Thyroid gland (tissue), 4 donors: ENCODE measurements at regions of chr18 and their contacts with region 1.

Region 1: GRCh38 chr18:48675352-48675761 is 136.5 kb downstream of the CTIF start:
- DNase-seq: peak; percentile 88 to 92
- H3K4me3 ChIP-seq: no peak overlapping the region
- H3K27ac ChIP-seq: no peak overlapping the region
- H3K4me1 ChIP-seq: peaks cover 6 to 23% of the 10 kb centered on the region in 2 donors
- H3K27me3 ChIP-seq: no peaks in the 10 kb centered on the region
- CTCF ChIP-seq: peak; percentile 71 to 97 (median 94)
- POLR2A ChIP-seq: no peak

Region 2: DNA sequence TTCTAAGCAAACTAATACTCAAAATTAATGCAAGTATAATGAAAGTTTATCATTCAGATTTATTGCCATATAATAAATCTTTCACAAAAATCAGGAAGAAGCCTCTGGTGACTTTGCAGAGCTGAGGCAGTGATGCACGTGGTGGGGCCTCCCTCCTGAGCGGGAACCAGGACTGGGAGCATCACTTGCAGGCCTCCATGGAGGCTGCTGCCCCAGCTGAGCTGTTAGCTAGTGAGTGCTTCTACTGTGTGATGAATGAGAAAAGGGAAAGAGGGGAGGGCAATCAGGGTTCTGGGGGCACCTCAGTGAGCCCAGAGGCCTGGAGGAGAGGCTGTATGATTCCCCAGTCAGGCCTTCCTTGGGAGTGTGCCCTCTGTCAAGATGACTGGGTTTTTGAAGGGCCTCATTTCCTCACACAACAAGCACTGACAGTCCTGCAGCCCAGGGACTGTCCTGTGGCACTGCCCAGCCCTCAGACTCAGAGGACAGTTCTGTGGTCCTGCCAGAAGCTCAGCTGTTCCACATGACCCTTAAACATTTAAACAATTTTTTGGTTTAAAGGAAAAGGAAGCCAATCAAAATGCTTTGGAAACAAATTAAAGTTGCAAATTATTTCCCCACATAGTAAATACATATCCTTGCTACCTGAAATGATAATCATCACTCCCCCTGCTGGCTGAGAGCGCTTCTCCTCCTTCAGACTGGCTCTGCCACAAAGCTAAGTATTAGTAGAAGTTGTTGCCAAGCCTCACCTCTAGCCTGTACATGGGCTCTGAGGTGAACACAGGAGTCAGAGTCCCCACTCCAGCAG is 366.3 kb after region 1 on chr18:
- intact Hi-C with region 1: loop called (anchors 10 kb)
- DNase-seq: peak; percentile 83 to 84
- H3K4me3 ChIP-seq: no peak overlapping the region
- H3K27ac ChIP-seq: peak overlapping the region in 1 of 3 donors; percentile 19
- H3K4me1 ChIP-seq: peaks cover 0 to 10% of the 10 kb centered on the region in 2 donors
- H3K27me3 ChIP-seq: no peaks in the 10 kb centered on the region
- CTCF ChIP-seq: peak; percentile 43 to 79 (median 67)
- POLR2A ChIP-seq: no peak

Region 3: DNA sequence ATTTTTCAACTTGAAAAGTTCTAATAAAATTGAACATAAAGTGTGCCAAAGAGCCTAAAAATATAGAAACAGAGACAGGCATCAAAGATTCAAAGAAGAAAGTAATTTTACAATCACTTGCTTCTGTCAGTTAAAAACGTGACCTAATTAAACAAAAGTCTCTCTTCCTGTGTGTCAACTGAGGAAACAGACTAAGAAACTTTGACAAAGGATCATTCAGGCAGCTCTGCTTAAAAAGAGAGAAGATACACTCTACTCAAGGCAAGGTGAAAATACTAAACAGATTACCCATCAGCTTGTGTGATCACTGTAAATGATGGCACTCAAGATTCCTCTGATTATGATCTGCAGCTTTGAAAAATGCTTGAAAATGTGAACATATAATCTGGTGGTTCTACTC is 737.3 kb after region 1 on chr18:
- intact Hi-C with region 1: loop called (anchors 10 kb)
- DNase-seq: no peak
- H3K4me3 ChIP-seq: no peak overlapping the region
- H3K27ac ChIP-seq: peak overlapping the region in 1 of 3 donors; percentile 9
- H3K4me1 ChIP-seq: peaks cover 3 to 8% of the 10 kb centered on the region in 2 donors
- H3K27me3 ChIP-seq: no peaks in the 10 kb centered on the region
- CTCF ChIP-seq: no peak
- POLR2A ChIP-seq: no peak

Region 4: GRCh38 chr18:49447810-49448745 is 772.7 kb after region 1 on chr18:
- intact Hi-C with region 1: loop called (anchors 10 kb)
- DNase-seq: peak; percentile 16 to 25
- H3K4me3 ChIP-seq: no peak overlapping the region
- H3K27ac ChIP-seq: no peak overlapping the region
- H3K4me1 ChIP-seq: no peaks in the 10 kb centered on the region
- H3K27me3 ChIP-seq: no peaks in the 10 kb centered on the region
- CTCF ChIP-seq: peak in 5 of 6 experiments; percentile 31 to 63 (median 39)
- POLR2A ChIP-seq: no peak